Activated naive CD4-positive, alpha-beta T cell treated with anti-CD3 and anti-CD28 coated beads for 36 hours (primary cell): ENCODE measurements at regions of chr12 and their contacts with region 1.

Region 1: GRCh38 chr12:9750276-9751203 is 10.2 kb downstream of the CD69 start:
- DNase-seq: peak; percentile 68
- H3K4me3 Mint-ChIP-seq: peak overlapping the region; percentile 74
- H3K27ac Mint-ChIP-seq: peak overlapping the region; percentile 71
- H3K4me1 Mint-ChIP-seq: peaks cover 44% of the 10 kb centered on the region
- H3K27me3 Mint-ChIP-seq: no peaks in the 10 kb centered on the region

Region 2: GRCh38 chr12:9634177-9634803 is 116.2 kb before region 1 on chr12:
- CTCF ChIA-PET with region 1: interaction called, 7 read pairs
- intact Hi-C with region 1: loop called (anchors 1 kb)
- DNase-seq: peak; percentile 95
- H3K4me3 Mint-ChIP-seq: peak overlapping the region; percentile 55
- H3K27ac Mint-ChIP-seq: peak overlapping the region; percentile 90
- H3K4me1 Mint-ChIP-seq: peaks cover 56% of the 10 kb centered on the region
- H3K27me3 Mint-ChIP-seq: no peaks in the 10 kb centered on the region

Region 3: GRCh38 chr12:9797722-9798619 is 47.4 kb after region 1 on chr12:
- CTCF ChIA-PET with region 1: interaction called, 537 read pairs
- intact Hi-C with region 1: loop called (anchors 1 kb)
- DNase-seq: peak; percentile 84
- H3K4me3 Mint-ChIP-seq: peak overlapping the region; percentile 0
- H3K27ac Mint-ChIP-seq: peak overlapping the region; percentile 98
- H3K4me1 Mint-ChIP-seq: peaks cover 40% of the 10 kb centered on the region
- H3K27me3 Mint-ChIP-seq: no peaks in the 10 kb centered on the region

Region 4: DNA sequence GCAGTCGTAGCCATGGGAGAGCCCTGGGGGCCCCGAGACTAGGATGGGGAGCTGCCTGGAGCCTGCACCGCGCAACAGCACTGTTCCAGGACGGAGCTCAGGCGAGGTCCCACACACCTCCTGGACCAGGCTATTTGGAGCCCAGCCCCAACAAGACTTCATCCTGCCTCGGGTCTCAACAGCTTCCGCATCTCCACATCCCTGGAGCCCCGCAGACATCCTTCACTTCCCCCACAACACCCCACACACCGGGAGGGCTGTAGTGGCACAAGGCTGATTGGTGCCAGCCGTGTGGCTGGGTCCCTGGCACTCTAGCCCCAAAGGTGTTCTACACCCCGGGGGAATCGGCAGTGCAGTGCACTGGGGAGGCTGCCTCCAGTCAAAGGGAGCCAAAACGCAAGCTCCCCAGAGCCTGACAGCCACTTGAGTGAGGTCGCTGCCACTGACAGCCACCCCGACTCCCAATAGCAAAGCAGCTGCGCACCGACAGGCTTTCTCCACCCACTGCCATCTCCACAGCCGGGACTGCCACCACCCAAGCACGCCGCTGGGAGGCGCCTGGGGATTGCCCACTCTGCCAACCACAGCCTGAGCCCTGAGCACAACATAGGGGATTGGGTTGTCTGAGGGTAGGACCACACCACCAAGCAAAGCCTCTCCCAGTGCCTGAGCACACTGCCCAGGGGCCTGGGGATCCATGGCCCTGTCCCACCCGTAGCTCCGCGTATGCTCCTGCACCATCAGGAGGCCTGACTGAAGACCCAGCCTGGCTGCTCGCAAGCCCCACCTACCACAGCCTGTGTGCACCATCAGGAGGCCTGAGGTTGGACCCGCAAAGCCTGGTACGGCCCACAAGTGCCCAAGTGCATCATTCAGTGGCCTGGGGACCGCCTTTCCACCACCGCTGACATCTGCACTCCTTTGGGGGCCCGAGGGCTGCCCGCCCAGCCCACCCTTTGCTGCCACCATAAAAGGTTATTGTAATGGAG is 63.6 kb after region 1 on chr12:
- CTCF ChIA-PET with region 1: interaction called, 25 read pairs
- intact Hi-C with region 1: loop called (anchors 1 kb)
- DNase-seq: peak; percentile 93
- H3K4me3 Mint-ChIP-seq: peak overlapping the region; percentile 77
- H3K27ac Mint-ChIP-seq: no peak overlapping the region
- H3K4me1 Mint-ChIP-seq: peaks cover 9% of the 10 kb centered on the region
- H3K27me3 Mint-ChIP-seq: no peaks in the 10 kb centered on the region

Region 5: DNA sequence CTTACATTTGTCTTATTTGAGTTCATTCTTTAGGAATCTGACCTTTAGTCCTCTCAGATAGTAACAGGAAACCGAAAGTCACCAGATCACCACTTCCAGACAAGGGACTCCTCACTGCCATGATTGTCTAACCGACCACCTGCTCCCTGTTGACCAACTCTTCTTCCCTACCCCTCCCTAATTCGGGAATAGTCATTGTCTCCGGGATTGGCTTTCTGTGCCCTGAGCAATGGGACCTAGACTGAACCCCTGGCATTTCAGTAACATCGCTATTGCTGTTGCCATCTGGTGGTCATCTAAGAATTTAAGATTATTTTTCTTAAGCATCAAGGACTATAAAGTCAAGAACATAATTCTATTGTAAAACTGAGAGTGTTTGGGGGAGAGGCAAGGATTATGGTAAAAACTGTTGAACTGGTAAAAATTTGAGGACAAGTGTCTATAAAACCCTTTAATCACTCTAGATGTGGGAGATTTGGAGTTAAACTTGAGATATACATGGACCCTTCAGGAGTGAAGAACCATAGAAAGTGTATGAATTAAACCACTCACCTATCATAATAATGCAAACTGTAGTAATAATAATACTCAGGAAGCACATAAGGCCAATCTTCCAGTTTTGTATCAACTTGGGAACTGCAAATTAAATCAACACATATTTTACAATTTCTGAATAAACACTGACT is 175.3 kb after region 1 on chr12:
- CTCF ChIA-PET with region 1: interaction called, 5 read pairs
- intact Hi-C with region 1: loop called (anchors 1 kb)
- DNase-seq: peak; percentile 9
- H3K4me3 Mint-ChIP-seq: peak overlapping the region; percentile 57
- H3K27ac Mint-ChIP-seq: peak overlapping the region; percentile 66
- H3K4me1 Mint-ChIP-seq: peaks cover 21% of the 10 kb centered on the region
- H3K27me3 Mint-ChIP-seq: peaks cover 2% of the 10 kb centered on the region

Region 6: DNA sequence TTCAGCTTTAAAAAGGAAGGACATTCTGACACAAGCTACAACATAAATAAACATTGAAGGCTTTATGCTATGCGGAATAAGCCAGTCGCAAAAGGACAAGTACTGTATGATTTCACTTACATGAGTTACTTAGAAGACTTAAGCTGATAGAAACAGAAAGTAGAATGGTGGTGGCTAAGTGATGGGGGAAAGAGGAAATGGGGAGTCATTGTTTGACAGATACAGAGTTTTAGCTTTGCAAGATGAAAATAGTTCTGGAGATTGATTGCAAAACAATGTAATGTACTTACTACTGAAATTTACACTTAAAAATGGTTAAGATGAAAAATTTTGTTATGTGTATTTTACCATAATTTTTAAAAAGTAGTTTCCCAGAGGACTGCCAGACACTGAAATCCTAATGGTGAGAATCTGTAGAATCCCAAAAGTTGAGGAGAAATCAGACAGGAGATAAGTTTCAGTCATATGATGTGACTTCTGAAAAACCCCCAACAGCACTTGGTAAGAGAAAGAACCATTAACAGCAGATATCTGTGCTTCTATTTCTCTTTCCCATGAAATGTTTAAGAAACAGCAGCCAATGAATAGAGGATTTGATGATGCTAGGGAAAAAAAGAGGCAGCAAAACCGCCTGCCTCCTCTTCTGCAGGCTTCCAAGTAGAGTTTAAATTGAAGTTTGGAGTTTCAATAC is 198.2 kb after region 1 on chr12:
- CTCF ChIA-PET with region 1: no interaction called
- intact Hi-C with region 1: no loop called
- DNase-seq: peak; percentile 20
- H3K4me3 Mint-ChIP-seq: no peak overlapping the region
- H3K27ac Mint-ChIP-seq: no peak overlapping the region
- H3K4me1 Mint-ChIP-seq: peaks cover 48% of the 10 kb centered on the region
- H3K27me3 Mint-ChIP-seq: no peaks in the 10 kb centered on the region

Region 7: GRCh38 chr12:10140001-10140400 is 389.5 kb after region 1 on chr12:
- CTCF ChIA-PET with region 1: interaction called, 18 read pairs
- intact Hi-C with region 1: loop called (anchors 1 kb)
- DNase-seq: peak; percentile 73
- H3K4me3 Mint-ChIP-seq: no peak overlapping the region
- H3K27ac Mint-ChIP-seq: no peak overlapping the region
- H3K4me1 Mint-ChIP-seq: peaks cover 2% of the 10 kb centered on the region
- H3K27me3 Mint-ChIP-seq: peaks cover 2% of the 10 kb centered on the region